ENCODE measurements at regions of chr14 and their contacts with region 1.

Region 1: GRCh38 chr14:54642801-54643697 is 76.1 kb downstream of the SAMD4A start:
- DNase-seq: peak; percentile 46
- ATAC-seq: peak; percentile 25
- H3K4me3 ChIP-seq: no peak overlapping the region
- H3K27ac ChIP-seq: peak overlapping the region; percentile 26; the same call in 1 of the 2 replicates
- H3K4me1 ChIP-seq: peaks cover 22% of the 10 kb centered on the region
- H3K27me3 ChIP-seq: no peaks in the 10 kb centered on the region
- CTCF ChIP-seq: peak; percentile 36; the same call in 1 of the 2 replicates
- POLR2A ChIP-seq: no peak
- RAD21 ChIP-seq: peak; percentile 50

Region 2: DNA sequence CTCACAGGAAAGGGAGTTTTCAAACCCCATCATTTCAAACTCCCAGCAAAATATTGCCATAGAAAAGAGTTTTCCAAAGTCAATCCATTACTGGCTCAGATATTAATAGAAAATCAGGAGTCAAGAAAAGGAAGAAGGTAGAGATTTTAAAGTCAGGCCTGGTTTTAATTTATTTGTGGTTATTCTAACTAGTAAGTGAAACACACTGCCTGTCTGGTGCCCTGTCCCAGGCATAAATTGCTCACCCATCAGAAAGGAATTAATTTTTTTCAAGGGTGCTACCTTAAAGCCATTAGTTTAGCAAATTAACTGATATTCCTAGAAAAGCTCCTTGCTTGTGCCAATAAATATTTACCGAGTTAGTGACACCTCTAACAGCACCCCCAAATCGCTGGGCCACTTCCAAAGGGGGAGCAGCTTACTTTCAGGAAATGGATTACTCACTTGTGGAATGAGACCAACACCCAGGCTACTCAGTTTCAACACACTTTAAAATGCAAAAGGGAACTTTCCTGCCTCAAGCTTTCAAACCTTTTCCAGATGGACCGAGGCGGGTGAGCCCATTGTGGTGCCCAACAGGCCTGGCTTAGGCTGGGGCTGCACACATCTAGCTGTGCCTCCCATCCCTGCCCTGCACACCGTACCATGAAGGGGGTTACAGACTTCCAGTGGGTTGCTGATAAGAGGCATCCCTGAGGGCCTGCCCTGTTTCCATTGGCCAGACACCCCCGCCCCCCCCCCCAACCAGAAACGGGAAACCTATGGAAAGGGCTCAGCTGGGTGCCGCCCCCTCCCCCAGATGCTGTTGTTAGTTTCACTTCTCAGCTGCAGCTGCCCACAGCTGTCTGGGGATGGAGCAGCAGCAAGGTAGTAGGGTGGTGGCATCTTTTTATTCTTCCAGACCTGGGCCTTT is 41.1 kb after region 1 on chr14:
- CTCF ChIA-PET with region 1: interaction called, 3 read pairs
- POLR2A ChIA-PET with region 1: no interaction called
- dilution Hi-C with region 1: no loop called
- in situ Hi-C with region 1: no loop called
- intact Hi-C with region 1: loop called (anchors 5 kb)
- DNase-seq: peak; percentile 80
- ATAC-seq: peak; percentile 57
- H3K4me3 ChIP-seq: no peak overlapping the region
- H3K27ac ChIP-seq: peak overlapping the region; percentile 96
- H3K4me1 ChIP-seq: peaks cover 47% of the 10 kb centered on the region
- H3K27me3 ChIP-seq: no peaks in the 10 kb centered on the region
- CTCF ChIP-seq: no peak
- POLR2A ChIP-seq: no peak
- RAD21 ChIP-seq: no peak